PC-9 (cell line): ENCODE measurements at regions of chr2 and their contacts with region 1.

Region 1: DNA sequence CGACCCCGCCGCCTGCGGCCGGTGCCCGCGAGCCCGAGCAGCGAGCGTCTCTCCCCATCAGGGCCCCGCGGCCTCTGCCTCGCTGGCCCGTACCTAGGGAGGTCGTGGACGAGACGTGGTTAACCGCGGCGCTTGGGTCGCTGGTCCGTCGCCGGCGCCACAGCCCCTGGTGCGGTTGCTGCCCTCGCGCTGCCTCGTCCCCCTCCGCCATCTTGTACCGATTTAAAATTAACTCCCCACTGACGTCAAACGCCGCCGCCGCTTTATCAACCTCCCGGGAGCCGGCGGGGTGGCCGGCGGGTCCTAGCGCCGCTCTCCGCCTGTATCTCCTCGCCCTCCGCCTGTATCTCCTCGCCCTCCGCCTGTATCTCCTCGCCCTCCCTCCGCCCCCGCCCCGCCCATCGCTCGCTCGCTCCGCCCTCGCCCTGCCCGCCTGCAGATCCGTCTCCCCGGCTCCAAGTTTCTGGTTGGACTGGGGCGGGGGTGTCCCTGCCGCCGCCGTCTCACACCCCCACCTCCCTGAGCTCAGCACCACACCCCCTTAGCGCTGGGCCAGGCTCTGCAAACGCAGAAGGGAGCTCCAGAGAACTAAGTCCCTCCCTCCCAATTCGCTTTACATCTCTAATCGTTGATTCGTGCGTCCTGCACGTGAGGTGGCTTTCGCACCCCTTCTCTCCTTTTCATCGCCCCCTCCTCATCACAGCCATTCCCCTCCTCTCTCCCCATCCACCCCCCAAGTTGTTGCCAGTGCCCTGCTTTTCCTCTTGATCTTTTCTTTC is at the start of gene ATL2:
- DNase-seq: peak; percentile 86 to 92
- H3K4me3 ChIP-seq: peak within 1 kb of the TSS; percentile 69
- H3K27ac ChIP-seq: peak within 1 kb of the TSS; percentile 78
- H3K4me1 ChIP-seq: peaks cover 28% of the 10 kb centered on the region
- H3K27me3 ChIP-seq: no peaks in the 10 kb centered on the region
- CTCF ChIP-seq: 0 out of 2 replicates have a peak, but pooled peaks have one; percentile 10
- total RNA-seq, gene ATL2: 66.4 and 75.3 TPM in 2 replicates

Region 2: DNA sequence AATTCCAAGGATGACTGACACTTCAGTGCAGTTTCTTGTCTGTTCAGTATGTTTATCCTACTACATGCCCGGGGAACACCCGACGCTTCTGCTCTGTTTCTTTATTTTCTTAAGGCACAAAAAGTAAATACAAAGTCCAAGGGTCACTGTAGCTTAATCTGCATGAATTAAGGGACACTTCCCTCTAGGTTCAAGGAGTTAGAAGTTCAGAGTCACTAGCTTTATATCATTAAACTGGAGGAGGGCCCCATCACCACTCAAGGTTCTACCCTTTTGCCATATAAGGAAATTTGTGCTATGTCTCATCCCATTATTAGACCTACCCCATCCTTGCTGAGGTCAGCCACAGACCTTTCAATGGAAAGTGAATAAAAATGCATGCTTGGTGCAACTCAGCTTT is 479.7 kb before region 1 on chr2:
- CTCF ChIA-PET with region 1: no interaction called
- POLR2A ChIA-PET with region 1: interaction called, 20 read pairs
- intact Hi-C with region 1: no loop called
- DNase-seq: no peak
- H3K4me3 ChIP-seq: no peak overlapping the region
- H3K27ac ChIP-seq: no peak overlapping the region
- H3K4me1 ChIP-seq: no peaks in the 10 kb centered on the region
- H3K27me3 ChIP-seq: no peaks in the 10 kb centered on the region
- CTCF ChIP-seq: no peak

Region 3: GRCh38 chr2:38178547-38179419 is 198.5 kb before region 1 on chr2:
- CTCF ChIA-PET with region 1: no interaction called
- POLR2A ChIA-PET with region 1: interaction called, 11 read pairs
- intact Hi-C with region 1: no loop called
- DNase-seq: peak; percentile 48 to 73
- H3K4me3 ChIP-seq: no peak overlapping the region
- H3K27ac ChIP-seq: peak overlapping the region; percentile 25
- H3K4me1 ChIP-seq: peaks cover 41% of the 10 kb centered on the region
- H3K27me3 ChIP-seq: no peaks in the 10 kb centered on the region
- CTCF ChIP-seq: no peak

Region 4: GRCh38 chr2:38362232-38362631 is 15.0 kb before region 1 on chr2:
- CTCF ChIA-PET with region 1: interaction called, 11 read pairs
- POLR2A ChIA-PET with region 1: no interaction called
- intact Hi-C with region 1: no loop called
- DNase-seq: no peak
- H3K4me3 ChIP-seq: no peak overlapping the region
- H3K27ac ChIP-seq: no peak overlapping the region
- H3K4me1 ChIP-seq: peaks cover 7% of the 10 kb centered on the region; the same call in 1 of the 2 replicates
- H3K27me3 ChIP-seq: no peaks in the 10 kb centered on the region
- CTCF ChIP-seq: no peak

Region 5: GRCh38 chr2:38438883-38439612 is 61.8 kb after region 1 on chr2:
- CTCF ChIA-PET with region 1: no interaction called
- POLR2A ChIA-PET with region 1: interaction called, 4 read pairs
- intact Hi-C with region 1: loop called (anchors 2 kb)
- DNase-seq: peak; percentile 49 to 71
- H3K4me3 ChIP-seq: no peak overlapping the region; the same call in 1 of the 2 replicates
- H3K27ac ChIP-seq: peak overlapping the region; percentile 62
- H3K4me1 ChIP-seq: peaks cover 72% of the 10 kb centered on the region
- H3K27me3 ChIP-seq: no peaks in the 10 kb centered on the region
- CTCF ChIP-seq: no peak

Region 6: GRCh38 chr2:38508311-38509039 is 131.2 kb after region 1 on chr2:
- CTCF ChIA-PET with region 1: no interaction called
- POLR2A ChIA-PET with region 1: no interaction called
- intact Hi-C with region 1: loop called (anchors 2 kb)
- DNase-seq: peak; percentile 69 to 78
- H3K4me3 ChIP-seq: no peak overlapping the region
- H3K27ac ChIP-seq: no peak overlapping the region
- H3K4me1 ChIP-seq: peaks cover 10% of the 10 kb centered on the region
- H3K27me3 ChIP-seq: no peaks in the 10 kb centered on the region
- CTCF ChIP-seq: peak; percentile 79

Region 7: GRCh38 chr2:38911191-38911590 is 534.0 kb after region 1 on chr2:
- CTCF ChIA-PET with region 1: no interaction called
- POLR2A ChIA-PET with region 1: no interaction called
- intact Hi-C with region 1: no loop called
- DNase-seq: no peak
- H3K4me3 ChIP-seq: no peak overlapping the region
- H3K27ac ChIP-seq: no peak overlapping the region
- H3K4me1 ChIP-seq: 0 out of 2 replicates have a peak, but pooled peaks cover 4% of the 10 kb centered on the region
- H3K27me3 ChIP-seq: no peaks in the 10 kb centered on the region
- CTCF ChIP-seq: no peak